ENCODE measurements at regions of chr1 and their contacts with region 1.

Region 1: DNA sequence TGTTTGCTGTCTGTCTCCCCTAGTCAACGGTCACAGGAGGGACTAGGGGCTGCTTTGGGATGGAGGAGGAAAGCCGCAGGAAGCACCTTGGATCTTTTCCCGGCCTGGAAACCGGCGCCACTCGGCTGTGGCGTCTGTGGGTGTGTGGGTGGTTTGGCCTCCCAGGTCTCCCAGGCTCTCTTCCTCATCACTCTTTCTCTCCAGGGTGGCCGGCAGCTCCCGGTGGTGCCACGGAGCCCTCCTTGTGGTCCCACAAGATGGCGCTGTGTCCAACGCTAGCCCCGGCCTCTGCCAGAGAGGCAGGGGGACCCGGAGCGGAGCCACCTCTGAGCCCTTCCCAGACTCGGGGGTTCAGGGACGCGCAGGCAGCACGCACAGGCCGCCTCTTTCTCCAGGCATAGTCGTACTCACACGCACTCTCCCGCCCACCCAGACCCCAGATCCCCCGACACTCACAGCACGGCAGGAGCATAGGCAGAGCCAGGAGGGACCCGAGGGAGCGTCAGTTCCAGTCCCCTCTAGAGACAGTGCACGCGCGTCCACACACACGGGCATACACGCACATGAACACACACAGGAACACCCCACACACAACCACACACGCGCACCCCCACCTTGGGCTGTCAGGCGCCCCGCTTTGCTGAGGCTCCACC is 31.2 kb downstream of the CDCP2 start:
- DNase-seq: peak; percentile 76 to 94 (median 85)
- ATAC-seq: peak; percentile 55 to 88 (median 78)
- H3K4me3 ChIP-seq: peak overlapping the region in 2 of 4 donors; percentile 10 to 33
- H3K27ac ChIP-seq: peak overlapping the region in 2 of 4 donors; percentile 39 to 44
- H3K4me1 ChIP-seq: peaks cover 4 to 33% (median 11%) of the 10 kb centered on the region in 3 donors
- H3K27me3 ChIP-seq: no peaks in the 10 kb centered on the region
- CTCF ChIP-seq: peak; percentile 62 to 83 (median 67)

Region 2: GRCh38 chr1:54406339-54407153 is 284.9 kb after region 1 on chr1 and contains the start of gene SSBP3:
- intact Hi-C with region 1: loop called in 1 of 3 experiments (anchors 10 kb)
- DNase-seq: peak; percentile 90 to 98 (median 94)
- ATAC-seq: peak; percentile 86 to 93 (median 90)
- H3K4me3 ChIP-seq: peak within 1 kb of the TSS; percentile 67 to 82 (median 76)
- H3K27ac ChIP-seq: peak within 1 kb of the TSS; percentile 67 to 90 (median 80)
- H3K4me1 ChIP-seq: peaks cover 4 to 27% (median 14%) of the 10 kb centered on the region in 3 donors
- H3K27me3 ChIP-seq: no peaks in the 10 kb centered on the region
- CTCF ChIP-seq: no peak
- total RNA-seq, gene SSBP3: 20.5 to 25.2 (median 22.9) TPM